A673 (cell line): ENCODE measurements at regions of chr1 and their contacts with region 1.

Region 1: GRCh38 chr1:100459358-100460114 is 78.4 kb upstream of the GPR88 start:
- DNase-seq: peak; percentile 86
- H3K4me3 ChIP-seq: no peak overlapping the region
- H3K27ac ChIP-seq: no peak overlapping the region
- H3K4me1 ChIP-seq: peaks cover 11% of the 10 kb centered on the region
- H3K27me3 ChIP-seq: no peaks in the 10 kb centered on the region
- CTCF ChIP-seq: peak; percentile 88

Region 2: GRCh38 chr1:99808391-99809115 is 651.0 kb before region 1 on chr1:
- CTCF ChIA-PET with region 1: interaction called, 5 read pairs
- POLR2A ChIA-PET with region 1: no interaction called
- intact Hi-C with region 1: loop called (anchors 1 kb)
- DNase-seq: peak; percentile 93
- H3K4me3 ChIP-seq: peak overlapping the region; percentile 5
- H3K27ac ChIP-seq: no peak overlapping the region
- H3K4me1 ChIP-seq: peaks cover 6% of the 10 kb centered on the region
- H3K27me3 ChIP-seq: peaks cover 8% of the 10 kb centered on the region
- CTCF ChIP-seq: peak; percentile 73

Region 3: DNA sequence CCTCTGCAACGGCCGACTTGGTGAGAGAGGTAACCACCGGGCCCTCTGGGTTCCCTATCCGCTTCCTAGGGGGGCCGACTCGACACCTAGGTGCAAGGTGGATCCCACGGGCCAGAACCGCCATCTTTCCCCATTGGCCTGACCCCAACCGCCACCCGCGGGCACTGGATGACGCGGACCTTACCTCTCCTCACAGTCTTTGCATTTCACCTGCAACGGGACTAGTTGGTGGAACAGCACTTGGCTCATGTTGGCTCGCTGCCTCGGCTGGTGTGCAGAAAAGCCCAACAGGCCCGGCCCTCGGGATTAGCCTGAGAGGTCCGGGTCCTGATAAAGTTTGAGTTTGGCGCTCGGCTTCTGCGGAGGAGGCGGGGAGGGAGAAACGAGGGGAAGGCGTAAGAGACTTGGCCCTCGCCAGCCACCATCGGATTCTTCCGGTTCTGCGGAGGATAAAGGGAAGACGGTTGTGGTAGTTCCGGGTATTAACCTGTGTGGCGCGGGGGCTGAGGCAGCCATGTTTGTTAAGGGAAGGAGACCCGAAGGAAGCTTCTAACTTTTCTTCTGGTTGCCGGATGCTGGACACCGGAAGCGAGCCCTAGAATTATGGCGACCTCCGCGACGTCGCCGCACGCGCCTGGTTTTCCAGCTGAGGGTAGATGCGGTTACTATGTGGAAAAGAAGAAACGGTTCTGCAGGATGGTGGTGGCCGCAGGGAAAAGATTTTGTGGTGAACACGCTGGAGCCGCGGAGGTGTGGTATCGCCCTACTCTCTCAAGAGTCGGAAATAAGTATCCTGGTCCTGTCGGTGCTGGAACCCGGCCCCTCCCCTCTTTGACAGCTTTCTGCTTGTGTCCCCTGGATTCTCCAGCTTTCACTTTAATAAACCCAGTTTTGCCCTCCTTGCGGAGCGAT is 326.7 kb before region 1 on chr1 and contains the starts of genes SASS6 and TRMT13:
- CTCF ChIA-PET with region 1: interaction called, 4 read pairs
- POLR2A ChIA-PET with region 1: no interaction called
- intact Hi-C with region 1: loop called (anchors 10 kb)
- DNase-seq: peak; percentile 99
- H3K4me3 ChIP-seq: peak within 1 kb of the TSS; percentile 93
- H3K27ac ChIP-seq: peak within 1 kb of the TSS; percentile 82
- H3K4me1 ChIP-seq: peaks cover 20% of the 10 kb centered on the region
- H3K27me3 ChIP-seq: no peaks in the 10 kb centered on the region
- CTCF ChIP-seq: no peak
- total RNA-seq, gene SASS6: 15.1 and 16.8 TPM in 2 replicates
- total RNA-seq, gene TRMT13: 19.0 and 23.3 TPM in 2 replicates

Region 4: DNA sequence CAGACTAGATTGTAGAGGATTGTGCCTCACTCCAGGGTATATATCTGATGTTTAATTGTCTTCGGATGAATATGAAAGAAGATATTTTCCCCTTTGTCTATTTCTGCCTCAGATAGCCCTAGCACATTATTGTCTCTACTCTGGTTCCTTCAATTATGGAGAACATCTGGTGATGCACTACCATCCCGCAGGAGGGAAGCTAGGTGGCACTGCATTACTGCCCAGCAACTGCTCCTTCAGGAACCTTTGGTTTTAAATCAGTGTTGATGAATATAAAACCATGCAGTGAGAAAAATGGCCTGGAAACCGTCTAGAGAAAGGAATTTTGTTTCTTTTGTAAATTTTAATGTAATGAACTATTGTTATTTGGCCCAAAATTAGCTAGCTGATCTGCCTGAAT is 146.9 kb after region 1 on chr1:
- CTCF ChIA-PET with region 1: no interaction called
- POLR2A ChIA-PET with region 1: no interaction called
- intact Hi-C with region 1: loop called (anchors 5 kb)
- DNase-seq: peak; percentile 37
- H3K4me3 ChIP-seq: no peak overlapping the region
- H3K27ac ChIP-seq: no peak overlapping the region
- H3K4me1 ChIP-seq: no peaks in the 10 kb centered on the region
- H3K27me3 ChIP-seq: peaks cover 9% of the 10 kb centered on the region
- CTCF ChIP-seq: peak; percentile 64

Region 5: DNA sequence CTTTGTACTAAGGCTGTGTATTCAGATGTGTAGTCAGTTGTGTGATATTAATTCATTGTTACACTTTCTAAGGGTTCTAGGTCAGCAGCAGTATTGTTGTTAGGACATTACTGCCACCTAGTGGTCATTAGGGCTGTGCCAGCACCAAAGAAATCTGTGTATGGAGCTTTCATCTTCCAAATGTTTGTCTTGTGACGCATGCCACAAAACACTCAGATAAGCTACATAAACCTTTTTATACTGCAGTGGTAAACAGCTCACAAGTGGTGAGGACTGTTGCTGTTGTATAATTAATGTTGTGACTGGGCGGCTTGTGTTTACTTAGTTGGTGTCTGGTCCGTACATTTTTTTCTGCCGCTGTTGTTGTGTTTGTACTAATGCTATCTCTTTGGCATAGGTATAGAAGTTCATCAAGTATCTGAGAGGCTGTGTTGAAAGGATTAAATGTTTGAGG is 829.0 kb after region 1 on chr1:
- CTCF ChIA-PET with region 1: no interaction called
- POLR2A ChIA-PET with region 1: no interaction called
- intact Hi-C with region 1: loop called (anchors 10 kb)
- DNase-seq: peak; percentile 81
- H3K4me3 ChIP-seq: no peak overlapping the region
- H3K27ac ChIP-seq: no peak overlapping the region
- H3K4me1 ChIP-seq: peaks cover 20% of the 10 kb centered on the region
- H3K27me3 ChIP-seq: no peaks in the 10 kb centered on the region
- CTCF ChIP-seq: peak; percentile 94